ENCODE measurements at regions of chr2 and their contacts with region 1.

Region 1: GRCh38 chr2:96208143-96209010 is at the start of gene STARD7:
- DNase-seq: peak; percentile 97
- ATAC-seq: peak; percentile 86
- H3K4me3 ChIP-seq: peak within 1 kb of the TSS; percentile 84 to 91 (median 89)
- H3K4me3 Mint-ChIP-seq: peak within 1 kb of the TSS; percentile 95
- H3K27ac ChIP-seq: peak within 1 kb of the TSS; percentile 75 to 79
- H3K27ac Mint-ChIP-seq: peak within 1 kb of the TSS; percentile 91
- H3K4me1 ChIP-seq: peaks cover 46 to 65% of the 10 kb centered on the region in 2 donors
- H3K4me1 Mint-ChIP-seq: peaks cover 63% of the 10 kb centered on the region
- H3K27me3 ChIP-seq: no peaks in the 10 kb centered on the region
- H3K27me3 Mint-ChIP-seq: no peaks in the 10 kb centered on the region
- CTCF ChIP-seq: no peak
- total RNA-seq, gene STARD7: 132 and 133 TPM in 2 replicates

Region 2: GRCh38 chr2:95389245-95390119 is 818.9 kb before region 1 on chr2:
- CTCF ChIA-PET with region 1: no interaction called
- POLR2A ChIA-PET with region 1: no interaction called
- intact Hi-C with region 1: no loop called
- DNase-seq: peak; percentile 27
- ATAC-seq: no peak
- H3K4me3 ChIP-seq: no peak overlapping the region
- H3K4me3 Mint-ChIP-seq: no peak overlapping the region
- H3K27ac ChIP-seq: no peak overlapping the region
- H3K27ac Mint-ChIP-seq: no peak overlapping the region
- H3K4me1 ChIP-seq: no peaks in the 10 kb centered on the region
- H3K4me1 Mint-ChIP-seq: no peaks in the 10 kb centered on the region
- H3K27me3 ChIP-seq: peaks cover 0 to 3% (median 0%) of the 10 kb centered on the region in 4 experiments
- H3K27me3 Mint-ChIP-seq: no peaks in the 10 kb centered on the region
- CTCF ChIP-seq: peak; percentile 57

Region 3: DNA sequence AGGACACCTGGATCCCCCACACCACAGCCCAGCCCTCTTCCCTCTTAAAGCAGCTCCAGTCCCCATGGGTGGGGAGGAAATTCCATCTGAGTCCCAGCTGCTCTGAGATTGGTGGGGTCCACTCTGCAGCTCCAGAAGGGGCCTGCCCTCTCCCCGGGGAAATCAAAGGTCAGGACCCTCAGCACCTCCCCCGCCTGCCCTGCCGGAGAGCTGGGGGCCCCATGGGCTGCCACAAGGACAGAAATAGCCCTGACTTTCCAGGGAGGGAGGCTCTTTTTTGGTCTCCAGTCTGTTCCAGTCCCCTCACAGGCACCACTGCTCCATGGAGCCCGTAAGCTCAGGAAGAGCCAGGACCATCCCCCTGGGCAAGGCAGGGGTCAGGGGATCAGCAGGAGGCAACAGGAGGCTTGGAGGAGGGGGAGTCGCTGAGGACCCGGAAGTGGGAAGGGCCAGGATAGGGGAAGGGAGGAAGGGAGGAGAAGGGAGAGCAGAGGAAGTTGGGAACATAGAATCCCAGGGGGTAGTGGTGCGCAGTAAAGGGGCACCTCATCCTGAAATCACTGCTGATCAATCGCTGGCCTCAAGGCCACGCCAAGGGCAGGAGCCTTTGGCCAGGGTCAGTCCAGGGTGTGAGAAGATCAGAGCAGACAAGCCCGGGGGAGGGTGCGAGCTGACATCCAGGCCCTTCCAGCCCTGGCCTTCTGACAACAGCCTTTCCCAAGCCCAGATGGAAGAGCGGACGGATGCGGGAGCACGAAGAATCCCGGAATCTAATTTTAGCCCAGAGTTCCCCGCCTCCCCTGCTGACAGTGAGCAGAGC is 99.6 kb before region 1 on chr2:
- CTCF ChIA-PET with region 1: no interaction called
- POLR2A ChIA-PET with region 1: no interaction called
- intact Hi-C with region 1: no loop called
- DNase-seq: no peak
- ATAC-seq: no peak
- H3K4me3 ChIP-seq: no peak overlapping the region
- H3K4me3 Mint-ChIP-seq: no peak overlapping the region
- H3K27ac ChIP-seq: no peak overlapping the region
- H3K27ac Mint-ChIP-seq: no peak overlapping the region
- H3K4me1 ChIP-seq: no peaks in the 10 kb centered on the region
- H3K4me1 Mint-ChIP-seq: no peaks in the 10 kb centered on the region
- H3K27me3 ChIP-seq: peaks cover 0 to 3% (median 0%) of the 10 kb centered on the region in 4 experiments
- H3K27me3 Mint-ChIP-seq: peaks cover 10% of the 10 kb centered on the region
- CTCF ChIP-seq: no peak

Region 4: DNA sequence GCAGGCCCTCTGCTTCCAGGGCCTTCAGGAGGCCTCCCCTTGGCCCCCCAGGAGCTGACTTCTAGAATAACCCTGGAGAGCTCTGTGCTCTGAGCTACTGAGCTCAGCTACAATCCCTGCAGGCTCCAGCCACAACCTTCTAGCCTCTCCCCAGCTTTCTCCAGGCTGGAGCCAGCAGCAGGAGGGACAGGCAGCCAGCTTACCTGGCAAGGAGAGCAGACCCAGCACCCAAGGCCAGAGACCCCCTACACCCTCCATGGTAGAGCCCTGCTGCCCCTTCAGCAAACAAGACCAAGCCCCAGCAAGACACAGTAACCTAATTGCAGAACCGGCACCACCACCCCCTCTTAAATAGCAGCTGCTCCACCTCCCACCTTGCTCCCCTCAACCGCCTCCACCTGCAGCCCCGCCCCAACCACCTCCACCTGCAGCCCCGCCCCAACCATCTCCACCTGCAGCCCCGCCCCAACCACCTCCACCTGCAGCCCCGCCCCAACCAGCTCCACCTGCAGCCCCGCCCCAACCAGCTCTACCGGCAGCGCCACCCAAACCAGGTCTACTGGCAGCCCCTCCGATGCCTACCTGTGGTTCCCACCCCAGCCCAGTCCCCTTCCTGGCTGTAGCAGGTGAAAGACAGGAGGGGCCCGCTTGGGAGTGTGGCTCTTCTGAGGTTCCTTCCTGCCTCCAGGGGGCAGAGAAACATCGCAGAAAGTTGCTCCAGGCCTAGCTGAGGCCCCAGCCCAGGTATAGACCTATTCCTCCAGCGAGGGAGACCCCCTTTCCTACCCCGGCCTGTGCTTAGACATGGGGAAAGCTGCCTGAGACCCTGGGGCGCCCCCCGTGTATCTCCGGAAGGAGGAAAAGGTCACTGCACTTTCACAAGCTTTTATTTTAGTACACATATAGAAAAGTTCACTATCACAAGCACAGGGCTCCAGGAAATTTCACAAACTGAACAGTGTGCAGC is 69.9 kb before region 1 on chr2 and contains the start of gene ASTL:
- CTCF ChIA-PET with region 1: interaction called, 20 read pairs
- POLR2A ChIA-PET with region 1: interaction called, 3 read pairs
- intact Hi-C with region 1: no loop called
- DNase-seq: peak; percentile 81
- ATAC-seq: peak; percentile 63
- H3K4me3 ChIP-seq: no peak within 1 kb of the TSS
- H3K4me3 Mint-ChIP-seq: no peak within 1 kb of the TSS
- H3K27ac ChIP-seq: no peak within 1 kb of the TSS
- H3K27ac Mint-ChIP-seq: peak within 1 kb of the TSS; percentile 41
- H3K4me1 ChIP-seq: peaks cover 10 to 20% of the 10 kb centered on the region in 2 donors
- H3K4me1 Mint-ChIP-seq: peaks cover 27% of the 10 kb centered on the region
- H3K27me3 ChIP-seq: no peaks in the 10 kb centered on the region
- H3K27me3 Mint-ChIP-seq: no peaks in the 10 kb centered on the region
- CTCF ChIP-seq: peak; percentile 67
- total RNA-seq, gene ASTL: 0.41 and 0.59 TPM in 2 replicates

Region 5: DNA sequence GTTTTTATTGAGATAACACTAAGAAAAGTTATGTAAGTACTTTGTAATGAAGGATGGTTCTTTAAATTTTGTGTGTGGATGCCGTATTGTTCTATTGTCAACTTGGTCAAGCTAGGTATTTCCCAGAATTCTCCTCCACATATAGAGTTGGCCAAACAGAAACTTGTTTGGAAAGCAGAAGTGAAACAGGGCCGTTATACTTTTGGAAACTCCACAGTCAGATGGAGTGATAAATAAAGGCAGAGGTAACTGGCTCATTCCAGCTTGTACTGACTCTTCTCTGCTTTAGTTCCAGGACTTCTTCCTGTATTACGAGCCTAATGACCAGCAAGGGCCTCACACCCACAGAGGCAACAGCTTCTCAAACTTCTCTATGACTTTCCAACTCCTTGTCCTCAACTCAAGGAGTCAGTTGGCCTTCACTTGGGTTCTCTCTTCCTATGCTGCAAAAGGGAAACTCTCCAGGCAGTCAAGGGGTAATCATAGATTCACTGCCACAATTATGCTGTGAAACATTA is 16.7 kb after region 1 on chr2:
- CTCF ChIA-PET with region 1: interaction called, 7 read pairs
- POLR2A ChIA-PET with region 1: interaction called, 6 read pairs
- intact Hi-C with region 1: loop called (anchors 2 kb)
- DNase-seq: peak; percentile 70
- ATAC-seq: peak; percentile 85
- H3K4me3 ChIP-seq: no peak overlapping the region
- H3K4me3 Mint-ChIP-seq: peak overlapping the region; percentile 42
- H3K27ac ChIP-seq: peak overlapping the region; percentile 75 to 84
- H3K27ac Mint-ChIP-seq: peak overlapping the region; percentile 91
- H3K4me1 ChIP-seq: peaks cover 11 to 14% of the 10 kb centered on the region in 2 donors
- H3K4me1 Mint-ChIP-seq: peaks cover 16% of the 10 kb centered on the region
- H3K27me3 ChIP-seq: no peaks in the 10 kb centered on the region
- H3K27me3 Mint-ChIP-seq: no peaks in the 10 kb centered on the region
- CTCF ChIP-seq: no peak

Region 6: GRCh38 chr2:96241900-96242611 is 33.7 kb after region 1 on chr2:
- CTCF ChIA-PET with region 1: interaction called, 3 read pairs
- POLR2A ChIA-PET with region 1: interaction called, 13 read pairs
- intact Hi-C with region 1: loop called (anchors 1 kb)
- DNase-seq: peak; percentile 67
- ATAC-seq: peak; percentile 86
- H3K4me3 ChIP-seq: peak overlapping the region; percentile 4 to 42 (median 38)
- H3K4me3 Mint-ChIP-seq: peak overlapping the region; percentile 76
- H3K27ac ChIP-seq: peak overlapping the region; percentile 77 to 93
- H3K27ac Mint-ChIP-seq: peak overlapping the region; percentile 95
- H3K4me1 ChIP-seq: peaks cover 34 to 51% of the 10 kb centered on the region in 2 donors
- H3K4me1 Mint-ChIP-seq: peaks cover 46% of the 10 kb centered on the region
- H3K27me3 ChIP-seq: no peaks in the 10 kb centered on the region
- H3K27me3 Mint-ChIP-seq: no peaks in the 10 kb centered on the region
- CTCF ChIP-seq: no peak

Region 7: DNA sequence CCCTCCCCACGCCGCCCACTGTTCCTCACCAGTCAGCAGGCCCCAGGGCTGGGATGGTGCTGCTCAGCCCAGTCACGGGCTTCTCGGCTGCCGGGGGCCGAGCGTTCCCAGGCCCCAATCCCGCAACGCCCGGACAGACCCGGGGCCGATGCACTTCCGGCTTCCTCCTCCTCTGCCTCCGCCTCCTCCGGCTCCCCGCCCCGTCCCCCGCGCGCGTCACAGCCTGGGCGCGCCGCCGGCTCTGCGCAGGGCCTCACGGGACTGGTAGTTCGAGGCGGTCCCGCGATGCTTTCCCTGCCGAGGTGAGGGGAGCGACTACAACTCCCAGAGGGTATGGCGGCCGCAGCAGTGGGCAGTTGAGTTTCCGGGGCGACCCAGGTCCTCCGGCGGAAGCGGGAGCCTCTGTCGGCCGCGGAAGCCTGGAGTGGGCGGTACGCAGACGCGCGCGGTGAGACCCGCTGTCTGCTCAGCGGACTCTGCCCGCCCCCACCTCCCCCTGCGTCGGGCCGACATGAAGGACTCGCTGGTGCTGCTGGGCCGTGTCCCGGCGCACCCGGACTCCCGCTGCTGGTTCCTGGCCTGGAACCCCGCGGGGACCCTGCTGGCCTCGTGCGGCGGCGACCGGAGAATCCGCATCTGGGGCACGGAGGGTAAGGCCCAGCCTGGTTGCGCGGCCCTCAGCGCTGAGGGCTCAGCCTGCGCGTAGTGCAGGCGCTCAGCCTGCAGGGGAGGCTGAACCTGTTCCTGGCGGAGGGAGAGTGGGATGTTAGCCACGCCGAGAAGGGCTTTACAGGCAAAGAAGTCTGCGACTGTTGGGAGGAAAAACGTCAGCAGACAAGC is 57.7 kb after region 1 on chr2 and contains the starts of genes CIAO1 and TMEM127:
- CTCF ChIA-PET with region 1: interaction called, 23 read pairs
- POLR2A ChIA-PET with region 1: interaction called, 14 read pairs
- intact Hi-C with region 1: loop called (anchors 1 kb)
- DNase-seq: peak; percentile 97
- ATAC-seq: peak; percentile 93
- H3K4me3 ChIP-seq: peak within 1 kb of the TSS; percentile 93 to 97 (median 95)
- H3K4me3 Mint-ChIP-seq: peak within 1 kb of the TSS; percentile 99
- H3K27ac ChIP-seq: peak within 1 kb of the TSS; percentile 82 to 85
- H3K27ac Mint-ChIP-seq: peak within 1 kb of the TSS; percentile 94
- H3K4me1 ChIP-seq: peaks cover 23 to 34% of the 10 kb centered on the region in 2 donors
- H3K4me1 Mint-ChIP-seq: peaks cover 45% of the 10 kb centered on the region
- H3K27me3 ChIP-seq: no peaks in the 10 kb centered on the region
- H3K27me3 Mint-ChIP-seq: no peaks in the 10 kb centered on the region
- CTCF ChIP-seq: peak; percentile 22
- total RNA-seq, gene CIAO1: 85.4 and 91.2 TPM in 2 replicates
- total RNA-seq, gene TMEM127: 48.0 and 48.5 TPM in 2 replicates

Region 8: DNA sequence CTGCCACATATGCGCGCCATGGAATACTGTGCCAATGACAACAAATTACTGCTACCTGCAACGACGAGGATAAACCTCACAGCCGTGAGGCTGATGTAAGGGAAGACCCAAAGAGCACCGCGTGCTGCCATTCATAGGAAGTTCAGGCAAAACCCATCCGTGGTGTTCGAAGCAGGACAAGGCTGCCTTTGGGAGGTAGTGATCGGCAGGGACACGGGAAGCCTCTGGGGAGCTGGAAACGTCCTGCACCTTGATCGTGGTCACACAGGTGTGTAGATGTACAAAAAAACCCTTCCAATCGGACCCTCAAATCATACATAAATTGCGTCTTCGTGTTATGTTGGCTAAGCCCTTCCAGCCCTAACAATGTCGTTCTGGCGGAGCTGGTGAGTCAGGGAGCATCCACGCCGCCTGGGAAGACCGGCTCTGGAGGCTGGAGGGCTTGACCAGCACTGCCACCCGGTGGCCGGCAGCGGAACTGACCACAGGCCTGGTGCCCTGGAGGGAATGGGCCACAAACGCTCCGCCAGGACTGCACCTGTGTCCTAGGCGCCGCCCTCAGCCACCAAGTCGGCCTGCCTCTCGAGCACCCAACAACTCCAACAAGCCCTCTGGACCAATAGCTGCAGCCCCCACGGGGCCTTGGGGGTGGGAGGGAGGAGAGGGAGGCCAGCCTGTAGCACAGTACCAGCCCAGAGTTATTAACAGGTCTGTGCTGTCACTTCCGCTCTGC is 300.9 kb after region 1 on chr2:
- CTCF ChIA-PET with region 1: no interaction called
- POLR2A ChIA-PET with region 1: no interaction called
- intact Hi-C with region 1: loop called (anchors 10 kb)
- DNase-seq: peak; percentile 78
- ATAC-seq: peak; percentile 67
- H3K4me3 ChIP-seq: no peak overlapping the region
- H3K4me3 Mint-ChIP-seq: peak overlapping the region; percentile 78
- H3K27ac ChIP-seq: no peak overlapping the region
- H3K27ac Mint-ChIP-seq: no peak overlapping the region
- H3K4me1 ChIP-seq: peaks cover 18 to 23% of the 10 kb centered on the region in 2 donors
- H3K4me1 Mint-ChIP-seq: peaks cover 18% of the 10 kb centered on the region
- H3K27me3 ChIP-seq: peaks cover 0 to 16% (median 0%) of the 10 kb centered on the region in 4 experiments
- H3K27me3 Mint-ChIP-seq: peaks cover 14% of the 10 kb centered on the region
- CTCF ChIP-seq: peak; percentile 75

Measured in B cell (primary cell).